A549 (cell line): ENCODE measurements at regions of chr19 and their contacts with region 1.

Region 1: GRCh38 chr19:10106100-10106936 is at the start of gene PPAN:
- DNase-seq: peak; percentile 93 to 97
- ATAC-seq: peak; percentile 96 to 97
- H3K4me3 ChIP-seq: peak within 1 kb of the TSS; percentile 97
- H3K27ac ChIP-seq: peak within 1 kb of the TSS; percentile 96 to 99
- H3K4me1 ChIP-seq: peaks cover 17% of the 10 kb centered on the region; the same call in 2 of the 3 replicates
- CTCF ChIP-seq: no peak
- EP300 ChIP-seq: no peak
- POLR2A ChIP-seq: peak; percentile 71
- RAD21 ChIP-seq: no peak
- polyA plus RNA-seq, gene PPAN: 26.6 and 30.8 TPM in 2 replicates

Region 2: DNA sequence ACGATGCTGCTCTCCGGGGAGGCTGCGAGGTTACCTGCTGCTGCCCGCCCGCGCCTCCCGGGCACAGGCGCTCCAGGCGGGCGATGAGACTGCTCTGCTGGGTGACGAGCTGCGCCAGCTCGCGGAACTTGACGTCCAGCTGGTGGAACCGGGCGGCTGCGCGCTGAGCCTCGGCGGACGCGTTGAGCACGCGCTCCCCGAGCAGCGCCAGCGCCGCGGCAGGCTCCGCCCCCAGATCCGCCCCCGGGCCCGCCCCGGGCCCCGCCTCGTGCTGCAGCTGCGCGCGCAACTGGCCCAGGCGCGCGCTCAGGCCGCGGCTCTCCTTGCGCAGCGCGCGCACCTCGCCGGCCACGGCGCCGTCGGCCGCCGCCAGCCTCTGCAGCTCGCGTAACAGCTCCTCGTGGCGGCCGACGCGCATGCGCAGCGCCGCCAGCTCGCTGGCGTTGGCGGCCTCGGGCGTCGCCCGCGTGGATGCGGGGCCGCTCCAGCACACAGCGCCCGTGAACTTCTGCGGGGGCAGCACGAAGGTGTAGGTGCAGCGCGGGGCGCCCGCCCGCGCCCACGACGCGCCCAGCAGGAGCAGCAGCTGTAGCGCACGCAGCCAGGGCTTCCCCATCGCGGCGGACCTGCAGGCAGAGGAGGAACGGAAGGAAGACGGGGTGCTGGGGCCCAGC is 10.2 kb before region 1 on chr19:
- CTCF ChIA-PET with region 1: interaction called, 10 read pairs
- POLR2A ChIA-PET with region 1: interaction called, 12 read pairs
- DNase-seq: peak; percentile 80 to 88
- ATAC-seq: peak; percentile 81 to 88
- H3K4me3 ChIP-seq: peak overlapping the region; percentile 34
- H3K27ac ChIP-seq: peak overlapping the region; percentile 79 to 89
- H3K4me1 ChIP-seq: peaks cover 4% of the 10 kb centered on the region; the same call in 1 of the 3 replicates
- CTCF ChIP-seq: no peak
- EP300 ChIP-seq: no peak
- POLR2A ChIP-seq: peak; percentile 76
- RAD21 ChIP-seq: no peak